ENCODE measurements at regions of chr5 and their contacts with region 1.

Region 1: GRCh38 chr5:63963080-63963735 is 963 bp upstream of the HTR1A start:
- DNase-seq: peak; percentile 1
- ATAC-seq: peak; percentile 92
- H3K4me3 ChIP-seq: no peak overlapping the region
- H3K27ac ChIP-seq: no peak overlapping the region
- H3K4me1 ChIP-seq: no peaks in the 10 kb centered on the region
- H3K27me3 ChIP-seq: no peaks in the 10 kb centered on the region; a peak in 1 of 4 replicates
- CTCF ChIP-seq: peak; percentile 66 to 78 (median 69)
- EP300 ChIP-seq: 0 out of 4 replicates have a peak, but pooled peaks of 1 of the 2 experiments have one; percentile 16
- POLR2A ChIP-seq: no peak
- RAD21 ChIP-seq: peak; percentile 77

Region 2: DNA sequence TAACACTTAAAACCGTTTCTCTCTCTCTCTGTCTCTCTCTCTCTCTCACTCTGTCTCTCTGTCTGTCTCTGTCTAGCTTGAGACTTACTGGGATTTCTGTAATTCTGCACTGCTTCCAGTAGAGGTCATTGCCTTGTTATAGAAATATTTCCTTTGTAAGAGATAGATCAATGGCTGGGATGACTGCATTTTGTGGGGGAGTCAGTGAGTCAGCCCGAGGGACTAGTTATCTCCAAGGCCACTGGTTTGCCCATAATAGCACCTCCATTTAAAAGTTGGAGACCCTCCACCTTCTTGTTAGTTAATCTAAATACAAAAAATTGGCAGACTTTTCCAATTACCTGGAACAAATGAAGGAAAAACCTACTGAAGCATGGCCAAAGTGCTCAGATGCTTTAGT is 837.3 kb before region 1 on chr5:
- CTCF ChIA-PET with region 1: no interaction called
- POLR2A ChIA-PET with region 1: no interaction called
- RAD21 ChIA-PET with region 1: no interaction called
- SMC1A ChIA-PET with region 1: no interaction called
- in situ Hi-C with region 1: no loop called
- intact Hi-C with region 1: loop called (anchors 5 kb)
- DNase-seq: no peak
- ATAC-seq: peak; percentile 85
- H3K4me3 ChIP-seq: no peak overlapping the region
- H3K27ac ChIP-seq: no peak overlapping the region
- H3K4me1 ChIP-seq: no peaks in the 10 kb centered on the region
- H3K27me3 ChIP-seq: no peaks in the 10 kb centered on the region
- CTCF ChIP-seq: peak; percentile 33 to 46 (median 38); a peak in 5 of 6 replicates
- EP300 ChIP-seq: no peak
- POLR2A ChIP-seq: no peak
- RAD21 ChIP-seq: peak; percentile 46

Region 3: DNA sequence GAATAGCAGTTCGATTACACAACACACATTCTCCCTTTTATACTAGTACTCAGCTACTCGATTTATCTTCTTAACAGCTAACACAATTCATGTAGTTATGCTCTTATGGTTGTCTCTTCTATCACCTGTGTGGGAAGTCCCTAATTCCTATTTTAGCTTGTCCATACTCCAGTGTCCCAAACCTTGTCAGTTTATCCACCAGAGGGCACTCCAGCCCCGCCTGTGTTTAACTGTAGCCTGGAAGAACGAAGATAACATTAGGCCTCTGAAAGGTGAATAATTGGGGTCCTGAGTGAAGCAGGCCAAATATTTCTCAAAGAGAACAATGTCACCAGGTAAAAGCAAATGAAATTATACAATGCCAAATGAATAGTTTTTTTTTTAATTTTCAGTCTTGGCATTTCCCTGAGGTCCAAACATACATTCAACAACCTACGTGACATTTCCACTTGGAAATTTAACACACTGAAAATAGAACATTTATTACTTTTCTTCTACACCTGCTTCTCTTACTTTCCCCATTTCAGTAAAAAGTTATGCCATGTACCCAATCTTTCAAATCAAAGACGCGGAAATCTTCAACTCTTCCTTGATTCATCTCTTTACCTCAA is 561.7 kb before region 1 on chr5:
- CTCF ChIA-PET with region 1: interaction called, 20 read pairs
- POLR2A ChIA-PET with region 1: no interaction called
- RAD21 ChIA-PET with region 1: interaction called, 5 read pairs
- SMC1A ChIA-PET with region 1: interaction called, 5 read pairs
- in situ Hi-C with region 1: loop called (anchors 5 kb)
- intact Hi-C with region 1: loop called (anchors 1 kb)
- DNase-seq: peak; percentile 1
- ATAC-seq: peak; percentile 95
- H3K4me3 ChIP-seq: no peak overlapping the region
- H3K27ac ChIP-seq: no peak overlapping the region
- H3K4me1 ChIP-seq: no peaks in the 10 kb centered on the region
- H3K27me3 ChIP-seq: no peaks in the 10 kb centered on the region
- CTCF ChIP-seq: peak; percentile 64 to 76 (median 76)
- EP300 ChIP-seq: no peak
- POLR2A ChIP-seq: no peak
- RAD21 ChIP-seq: peak; percentile 87

Measured in GM12878 (cell line).